AG04450 (cell line): ENCODE measurements at regions of chr9 and their contacts with region 1.

Region 1: GRCh38 chr9:114405294-114406034 is 17.7 kb upstream of the AKNA start:
- DNase-seq: no peak
- H3K4me3 ChIP-seq: no peak overlapping the region
- H3K27ac ChIP-seq: no peak overlapping the region
- H3K27me3 ChIP-seq: no peaks in the 10 kb centered on the region
- CTCF ChIP-seq: peak; percentile 87

Region 2: DNA sequence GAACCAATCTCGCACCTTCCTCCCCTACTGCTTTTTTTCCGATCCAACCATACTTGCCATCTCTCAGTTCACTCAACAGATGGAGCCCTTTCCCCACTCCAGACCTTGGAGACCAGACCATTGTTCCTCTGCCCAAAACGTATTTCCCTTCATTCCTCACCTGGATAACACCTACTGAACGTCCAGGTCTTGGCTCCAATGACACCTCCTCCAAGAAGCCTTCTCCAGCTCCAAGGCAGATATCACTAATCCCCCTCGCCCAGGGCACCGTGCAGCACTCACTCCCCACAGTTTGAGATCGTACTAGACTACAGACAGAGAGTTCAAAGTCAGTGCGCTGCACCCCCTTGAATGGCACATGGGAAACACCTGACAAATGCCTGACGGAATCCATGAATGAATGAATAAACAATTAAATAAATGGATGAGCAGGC is 29.4 kb after region 1 on chr9:
- CTCF ChIA-PET with region 1: interaction called, 15 read pairs
- POLR2A ChIA-PET with region 1: no interaction called
- DNase-seq: no peak
- H3K4me3 ChIP-seq: no peak overlapping the region
- H3K27ac ChIP-seq: no peak overlapping the region
- H3K27me3 ChIP-seq: peaks cover 23% of the 10 kb centered on the region
- CTCF ChIP-seq: peak; percentile 75

Region 3: GRCh38 chr9:114487607-114488300 is 82.3 kb after region 1 on chr9:
- CTCF ChIA-PET with region 1: interaction called, 22 read pairs
- POLR2A ChIA-PET with region 1: no interaction called
- DNase-seq: peak; percentile 21
- H3K4me3 ChIP-seq: no peak overlapping the region
- H3K27ac ChIP-seq: no peak overlapping the region
- H3K27me3 ChIP-seq: peaks cover 8% of the 10 kb centered on the region
- CTCF ChIP-seq: peak; percentile 96

Region 4: DNA sequence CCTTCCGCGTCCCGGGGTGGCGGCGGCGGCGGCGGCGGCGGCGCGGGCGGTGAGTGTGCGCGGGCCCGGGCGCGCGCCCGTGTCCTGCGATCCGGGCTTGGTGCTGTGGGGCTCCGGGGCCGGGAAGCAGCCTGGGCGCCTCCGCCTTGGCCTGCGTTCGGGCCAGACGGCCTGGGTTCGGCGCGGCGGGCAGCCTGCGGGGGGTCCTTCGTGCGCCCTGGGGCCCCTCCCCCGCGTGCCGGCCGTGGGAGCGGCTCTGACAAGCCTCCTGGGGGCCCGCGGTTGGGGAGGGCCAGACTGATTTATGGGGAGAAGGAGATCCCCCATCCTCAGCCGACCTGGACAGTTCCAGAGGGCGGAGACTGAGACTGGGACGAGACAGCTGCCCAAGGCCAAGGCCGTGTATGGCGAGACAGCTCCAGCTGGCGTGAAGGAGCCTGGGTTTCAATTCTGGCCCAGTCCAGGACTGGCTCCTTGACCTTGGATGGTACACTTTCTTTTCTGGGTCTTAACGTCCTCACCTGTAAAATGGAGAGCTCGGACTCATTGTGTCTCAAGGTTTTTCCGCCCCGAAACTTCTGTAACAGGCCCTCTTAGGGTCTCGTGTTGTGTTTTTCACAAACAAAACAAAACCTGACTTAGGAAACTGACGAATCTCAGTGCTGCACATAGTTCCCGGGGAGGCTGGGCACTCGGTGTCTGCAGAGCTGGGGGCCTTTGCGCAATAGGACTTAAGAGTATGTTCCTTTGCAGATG is 206.2 kb after region 1 on chr9:
- CTCF ChIA-PET with region 1: interaction called, 15 read pairs
- POLR2A ChIA-PET with region 1: no interaction called
- DNase-seq: no peak
- H3K4me3 ChIP-seq: peak overlapping the region; percentile 65
- H3K27ac ChIP-seq: peak overlapping the region; percentile 77
- H3K27me3 ChIP-seq: no peaks in the 10 kb centered on the region
- CTCF ChIP-seq: no peak

Region 5: DNA sequence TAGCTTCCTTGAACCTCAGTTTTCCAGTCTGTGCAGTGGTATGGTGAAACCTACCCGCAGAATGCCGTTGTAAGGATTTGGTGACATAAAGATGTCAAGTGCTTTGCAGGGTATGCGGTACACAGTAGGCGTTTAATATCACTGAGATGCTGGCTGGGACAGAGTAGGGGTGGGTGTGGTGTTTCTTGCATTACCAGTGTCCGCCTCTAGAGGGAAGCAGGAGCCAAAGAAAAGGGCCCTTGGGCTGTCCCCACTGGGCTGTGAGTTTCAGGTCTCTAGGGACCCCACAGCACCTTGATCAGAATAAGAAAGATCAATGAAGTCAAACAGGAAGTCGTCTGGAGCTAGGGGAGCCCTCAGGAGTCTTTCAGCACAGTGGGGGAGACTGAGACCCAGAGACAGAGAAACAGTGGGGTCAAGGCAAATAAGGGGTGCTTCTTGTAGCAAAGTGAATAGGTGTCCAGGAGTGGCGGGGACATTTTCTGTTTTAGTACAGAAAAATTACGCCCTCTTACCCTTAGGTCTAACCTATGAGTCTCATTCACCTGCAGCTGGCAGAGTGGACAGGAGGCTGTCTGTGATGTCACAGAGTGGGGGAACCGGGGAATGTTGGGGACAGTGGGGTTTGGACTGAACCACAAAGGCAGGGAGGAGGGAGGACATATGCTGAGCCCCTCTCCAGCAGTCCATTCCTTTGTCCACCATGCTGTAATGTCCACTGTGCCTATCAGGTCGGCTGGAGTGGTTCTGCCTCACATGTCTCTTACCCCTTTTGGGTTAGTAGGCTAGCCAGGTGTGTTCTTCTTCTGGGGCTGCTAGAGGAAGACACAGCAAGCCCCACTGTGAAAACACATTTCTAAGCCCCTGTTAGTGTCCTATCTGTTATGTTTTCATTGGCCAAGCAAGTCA is 256.9 kb after region 1 on chr9:
- CTCF ChIA-PET with region 1: interaction called, 14 read pairs
- POLR2A ChIA-PET with region 1: no interaction called
- DNase-seq: no peak
- H3K4me3 ChIP-seq: no peak overlapping the region
- H3K27ac ChIP-seq: no peak overlapping the region
- H3K27me3 ChIP-seq: peaks cover 17% of the 10 kb centered on the region
- CTCF ChIP-seq: peak; percentile 93

Region 6: GRCh38 chr9:115013998-115014397 is 608.5 kb after region 1 on chr9:
- CTCF ChIA-PET with region 1: interaction called, 24 read pairs
- POLR2A ChIA-PET with region 1: no interaction called
- DNase-seq: peak; percentile 69
- H3K4me3 ChIP-seq: no peak overlapping the region
- H3K27ac ChIP-seq: no peak overlapping the region
- H3K27me3 ChIP-seq: no peaks in the 10 kb centered on the region
- CTCF ChIP-seq: peak; percentile 87